Heart right ventricle (tissue), 16 donors: ENCODE measurements at regions of chr18 and their contacts with region 1.

Region 1: DNA sequence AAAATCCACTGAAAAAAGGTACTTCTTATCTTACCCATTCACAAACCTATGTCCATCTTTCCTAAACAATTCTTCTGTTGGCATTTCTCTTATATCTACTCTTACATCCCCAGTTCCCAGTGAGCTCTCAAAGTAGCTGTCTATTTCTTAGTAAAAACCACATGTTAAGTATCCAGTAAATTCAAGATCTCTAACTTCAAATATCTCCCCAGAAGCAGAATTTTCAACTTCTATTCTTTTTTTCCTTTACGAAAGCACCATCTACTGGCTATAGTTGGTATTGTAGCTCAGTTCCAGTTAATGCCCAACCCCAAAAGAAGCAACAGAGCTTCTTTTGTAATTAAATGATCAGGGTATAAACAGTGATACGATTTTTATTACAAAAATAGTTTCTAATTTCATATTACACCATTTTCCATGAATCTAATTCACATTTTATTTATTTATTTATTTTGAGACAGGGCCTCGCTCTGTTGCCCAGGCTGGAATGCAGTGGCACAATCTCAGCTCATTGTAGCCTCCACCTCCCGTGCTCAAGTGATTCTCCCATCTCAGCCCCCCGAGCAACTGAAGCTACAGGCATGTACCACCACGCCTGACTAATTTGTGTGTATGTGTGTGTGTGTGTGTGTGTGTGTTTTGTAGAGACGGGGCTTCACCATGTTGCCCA is 28.5 kb downstream of the HRH4 start:
- DNase-seq: no peak
- ATAC-seq: peak in 3 of 8 donors; percentile 42 to 65 (median 53)
- H3K4me3 ChIP-seq: no peak overlapping the region
- H3K27ac ChIP-seq: no peak overlapping the region
- H3K4me1 ChIP-seq: peaks cover 0 to 8% (median 0%) of the 10 kb centered on the region in 9 donors
- H3K27me3 ChIP-seq: no peaks in the 10 kb centered on the region
- CTCF ChIP-seq: peak; percentile 62 to 89 (median 82)

Region 2: DNA sequence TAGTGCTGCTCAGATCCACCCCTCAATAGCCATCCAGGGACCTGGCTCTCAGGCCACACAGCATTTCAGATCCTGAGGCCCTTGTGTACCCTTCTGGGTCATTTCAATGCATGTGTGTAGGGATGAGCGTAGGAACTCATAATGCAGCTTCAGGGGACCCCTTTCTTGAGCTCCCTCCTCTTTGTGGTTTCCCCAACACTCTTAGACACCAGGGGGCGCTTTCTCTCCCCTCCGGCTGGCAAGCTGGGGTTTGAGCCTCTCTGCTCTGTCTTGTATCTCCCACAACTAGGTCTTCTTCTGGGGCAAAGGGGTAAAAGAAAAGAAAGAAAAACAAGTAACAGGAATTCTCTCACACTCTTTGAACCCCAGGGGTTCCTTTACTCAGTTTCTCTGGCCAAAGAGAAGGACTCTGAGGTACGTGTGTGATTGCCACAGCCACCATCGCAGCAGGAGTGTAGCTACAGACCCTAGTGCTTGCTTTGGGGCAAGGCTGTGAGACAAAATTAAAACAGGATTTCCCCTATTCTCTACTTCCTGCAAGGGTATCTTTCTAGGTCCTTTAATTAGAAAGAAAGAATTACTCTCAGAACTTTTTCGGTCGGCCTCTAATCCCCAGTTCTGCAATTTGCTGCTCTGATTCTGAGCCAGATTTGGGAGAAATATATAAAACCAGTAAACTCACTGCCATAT is 312.1 kb before region 1 on chr18:
- intact Hi-C with region 1: loop called in 5 of 10 experiments (anchors 2 to 10 kb)
- DNase-seq: peak; percentile 29 to 67
- ATAC-seq: peak; percentile 58 to 85 (median 81)
- H3K4me3 ChIP-seq: no peak overlapping the region
- H3K27ac ChIP-seq: no peak overlapping the region
- H3K4me1 ChIP-seq: peaks cover 0 to 14% (median 5%) of the 10 kb centered on the region in 9 donors
- H3K27me3 ChIP-seq: no peaks in the 10 kb centered on the region
- CTCF ChIP-seq: peak; percentile 64 to 86 (median 80)

Region 3: GRCh38 chr18:24362758-24363157 is 126.2 kb before region 1 on chr18:
- intact Hi-C with region 1: loop called (anchors 1 to 10 kb)
- DNase-seq: no peak
- ATAC-seq: no peak
- H3K4me3 ChIP-seq: no peak overlapping the region
- H3K27ac ChIP-seq: no peak overlapping the region
- H3K4me1 ChIP-seq: peaks cover 0 to 5% (median 0%) of the 10 kb centered on the region in 9 donors
- H3K27me3 ChIP-seq: no peaks in the 10 kb centered on the region
- CTCF ChIP-seq: no peak

Region 4: DNA sequence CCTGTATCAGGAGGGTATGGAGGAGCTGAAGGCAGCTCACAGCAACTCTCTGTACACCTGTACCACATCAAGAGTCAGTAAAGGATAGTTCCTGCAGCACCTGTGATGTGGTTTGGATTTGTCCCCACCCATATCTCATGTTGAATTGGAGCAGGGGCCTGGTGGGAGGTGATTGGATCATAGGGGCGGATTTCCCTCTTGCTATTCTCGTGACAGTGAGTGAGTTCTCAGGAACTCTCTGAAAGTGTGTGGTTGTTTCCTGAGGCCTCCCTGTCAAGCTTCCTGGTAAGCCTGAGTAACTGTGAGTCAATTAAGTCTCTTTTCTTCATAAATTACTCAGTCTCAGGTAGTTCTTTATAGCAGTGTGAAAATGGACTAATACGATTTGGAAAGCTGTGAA is 120.2 kb before region 1 on chr18:
- intact Hi-C with region 1: loop called in 2 of 10 experiments (anchors 5 to 10 kb)
- DNase-seq: no peak
- ATAC-seq: no peak
- H3K4me3 ChIP-seq: no peak overlapping the region
- H3K27ac ChIP-seq: no peak overlapping the region
- H3K4me1 ChIP-seq: no peaks in the 10 kb centered on the region
- H3K27me3 ChIP-seq: no peaks in the 10 kb centered on the region
- CTCF ChIP-seq: no peak

Region 5: GRCh38 chr18:24426398-24427294 is 62.3 kb before region 1 on chr18 and contains the start of gene IMPACT:
- intact Hi-C with region 1: loop called in 1 of 10 experiments (anchors 10 kb)
- DNase-seq: peak; percentile 81 to 88
- ATAC-seq: peak; percentile 97 to 99 (median 98)
- H3K4me3 ChIP-seq: peak within 1 kb of the TSS; percentile 71 to 98 (median 80)
- H3K27ac ChIP-seq: peak within 1 kb of the TSS; percentile 68 to 90 (median 84)
- H3K4me1 ChIP-seq: peaks cover 0 to 27% (median 14%) of the 10 kb centered on the region in 9 donors
- H3K27me3 ChIP-seq: peaks cover 0 to 38% (median 24%) of the 10 kb centered on the region in 7 donors
- CTCF ChIP-seq: no peak
- total RNA-seq, gene IMPACT: 19.2 to 33.8 (median 26.9) TPM

Region 6: DNA sequence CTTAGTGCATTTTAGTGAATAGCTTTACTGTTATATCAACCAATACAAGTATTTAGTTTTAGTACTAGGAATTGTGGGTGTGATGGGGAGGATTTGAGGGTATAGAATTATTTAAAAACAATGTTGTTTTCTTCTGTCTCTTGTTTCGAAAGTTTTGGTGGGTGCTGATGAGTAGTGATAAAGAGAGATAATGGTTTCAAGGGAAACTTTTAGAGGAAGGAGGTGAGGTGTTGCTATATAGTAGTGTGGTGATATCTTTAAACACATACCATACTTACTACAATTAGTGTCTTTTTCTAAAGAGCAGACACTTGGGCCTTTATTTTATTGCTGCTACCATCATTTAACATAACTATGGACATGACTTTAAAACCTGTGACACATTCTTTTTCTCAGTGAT is 52.0 kb before region 1 on chr18:
- intact Hi-C with region 1: no loop called
- DNase-seq: no peak
- ATAC-seq: no peak
- H3K4me3 ChIP-seq: no peak overlapping the region
- H3K27ac ChIP-seq: no peak overlapping the region
- H3K4me1 ChIP-seq: no peaks in the 10 kb centered on the region
- H3K27me3 ChIP-seq: no peaks in the 10 kb centered on the region
- CTCF ChIP-seq: no peak